ENCODE measurements at regions of chrX and their contacts with region 1.

Region 1: DNA sequence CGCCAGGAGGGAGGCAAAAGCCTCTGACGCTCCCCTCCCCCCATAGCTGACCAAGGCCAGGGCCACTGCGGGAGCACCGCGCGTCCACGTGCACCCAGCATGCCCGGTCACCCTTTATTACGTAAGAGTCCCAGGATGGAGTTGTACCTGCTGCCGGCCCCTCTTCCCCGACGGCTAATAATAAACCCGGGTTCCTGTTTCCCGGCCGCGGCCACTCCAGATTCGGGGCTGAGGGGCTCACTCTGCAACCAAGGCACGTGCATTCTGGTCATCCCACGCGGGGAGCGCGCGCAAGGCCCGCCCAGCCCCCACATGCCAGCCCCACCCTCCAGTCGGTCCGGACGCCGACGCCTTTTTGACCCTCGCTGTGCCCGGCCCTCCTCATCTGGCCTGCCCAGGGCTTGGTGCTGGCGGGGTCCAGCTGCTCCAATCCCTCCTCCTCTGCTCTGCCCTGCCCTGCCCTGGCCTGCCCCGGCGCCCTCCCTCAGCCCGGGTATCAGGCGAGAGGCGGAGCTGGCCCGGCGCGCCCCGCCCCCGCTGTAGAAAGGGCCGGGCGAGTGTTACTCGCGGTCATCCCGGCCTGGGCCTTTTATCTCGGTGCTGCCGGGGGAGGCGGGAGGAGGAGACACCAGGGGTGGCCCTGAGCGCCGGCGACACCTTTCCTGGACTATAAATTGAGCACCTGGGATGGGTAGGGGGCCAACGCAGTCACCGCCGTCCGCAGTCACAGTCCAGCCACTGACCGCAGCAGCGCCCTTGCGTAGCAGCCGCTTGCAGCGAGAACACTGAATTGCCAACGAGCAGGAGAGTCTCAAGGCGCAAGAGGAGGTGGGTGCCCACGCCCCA is 2.5 kb downstream of the MID1IP1 start:
- DNase-seq: peak; percentile 71 to 94 (median 87)

Region 2: DNA sequence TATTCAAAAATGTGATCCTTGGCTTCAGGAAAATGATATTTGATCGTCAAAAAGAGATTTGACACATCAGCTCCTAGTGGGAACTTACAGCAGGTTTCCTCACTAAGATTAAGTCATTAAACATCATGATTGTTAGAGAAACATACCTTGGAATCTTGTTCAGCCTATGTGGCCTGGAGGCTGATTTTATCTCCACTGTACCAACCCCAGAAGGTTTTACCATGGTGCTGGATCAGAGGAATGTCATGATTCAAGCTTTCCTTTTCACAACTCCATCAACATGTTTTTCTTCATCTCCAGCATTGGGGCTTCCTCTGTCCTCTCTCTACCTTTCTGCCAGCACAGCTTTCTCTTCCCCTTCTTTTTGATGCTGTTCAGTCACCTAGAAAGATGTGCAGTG is 70.9 kb before region 1 on chrX:
- intact Hi-C with region 1: no loop called
- DNase-seq: no peak

Region 3: GRCh38 chrX:38848671-38849455 is 45.1 kb after region 1 on chrX:
- intact Hi-C with region 1: no loop called
- DNase-seq: peak in 7 of 42 donors; percentile 6 to 55 (median 12)

Region 4: GRCh38 chrX:38985375-38985774 is 181.6 kb after region 1 on chrX:
- intact Hi-C with region 1: loop called (anchors 10 kb)
- DNase-seq: no peak